H1 (cell line): ENCODE measurements at regions of chr11 and their contacts with region 1.

Region 1: GRCh38 chr11:131350872-131351271 is 19.5 kb upstream of the NTM start:
- DNase-seq: no peak
- H3K4me3 ChIP-seq: no peak overlapping the region
- H3K27ac ChIP-seq: no peak overlapping the region
- H3K4me1 ChIP-seq: peaks cover 0 to 16% (median 6%) of the 10 kb centered on the region in 4 experiments; a peak in 4 of 7 replicates
- H3K27me3 ChIP-seq: no peaks in the 10 kb centered on the region
- CTCF ChIP-seq: no peak
- EP300 ChIP-seq: no peak
- POLR2A ChIP-seq: no peak
- RAD21 ChIP-seq: no peak

Region 2: DNA sequence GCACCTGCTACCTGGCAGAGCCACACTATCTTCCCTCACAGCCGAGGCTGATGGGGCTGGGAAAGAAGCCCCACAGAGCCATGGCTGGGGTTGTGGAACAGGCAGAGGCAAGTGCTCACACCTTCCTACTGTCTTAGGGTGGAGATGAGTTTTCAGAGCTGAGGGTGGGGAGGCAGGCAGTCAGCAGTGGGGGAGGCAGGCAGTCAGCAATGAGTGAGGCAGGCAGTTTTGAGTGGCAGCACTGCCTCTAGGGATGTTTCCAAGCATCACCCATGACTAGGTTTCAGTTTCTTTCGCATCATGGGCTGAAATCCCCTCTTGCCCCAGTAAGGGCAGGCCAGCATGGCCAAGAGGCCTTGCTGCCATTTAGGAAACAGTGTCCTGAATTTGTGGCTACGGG is 22.0 kb before region 1 on chr11:
- CTCF ChIA-PET with region 1: interaction called, 10 read pairs
- POLR2A ChIA-PET with region 1: interaction called, 3 read pairs
- DNase-seq: no peak
- H3K4me3 ChIP-seq: no peak overlapping the region
- H3K27ac ChIP-seq: no peak overlapping the region
- H3K4me1 ChIP-seq: peaks cover 2 to 9% (median 4%) of the 10 kb centered on the region in 4 experiments; a peak in 5 of 7 replicates
- H3K27me3 ChIP-seq: no peaks in the 10 kb centered on the region
- CTCF ChIP-seq: no peak
- EP300 ChIP-seq: no peak
- POLR2A ChIP-seq: no peak
- RAD21 ChIP-seq: no peak

Region 3: DNA sequence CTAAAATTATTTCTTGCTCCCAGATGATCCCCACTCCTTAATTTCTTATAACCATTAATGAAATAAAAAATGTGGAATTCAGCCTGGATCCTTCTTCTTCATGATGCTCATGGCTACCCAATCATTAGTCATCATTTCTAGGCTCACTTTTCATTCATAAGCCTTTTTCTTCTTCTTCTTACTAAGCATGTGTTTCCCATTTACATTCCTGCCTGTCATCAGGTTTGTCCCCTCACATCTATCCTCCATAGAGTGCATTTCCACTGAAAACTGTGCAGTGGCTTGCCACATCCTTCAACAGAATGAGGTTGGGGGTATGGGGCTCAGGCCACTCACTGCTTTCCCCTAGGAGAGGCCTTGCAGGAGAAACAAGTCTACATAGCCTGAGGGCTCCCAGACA is 16.3 kb before region 1 on chr11:
- CTCF ChIA-PET with region 1: interaction called, 11 read pairs
- POLR2A ChIA-PET with region 1: interaction called, 3 read pairs
- DNase-seq: no peak
- H3K4me3 ChIP-seq: no peak overlapping the region
- H3K27ac ChIP-seq: no peak overlapping the region
- H3K4me1 ChIP-seq: no peaks in the 10 kb centered on the region; a peak in 1 of 7 replicates
- H3K27me3 ChIP-seq: no peaks in the 10 kb centered on the region
- CTCF ChIP-seq: no peak
- EP300 ChIP-seq: no peak
- POLR2A ChIP-seq: no peak
- RAD21 ChIP-seq: no peak

Region 4: DNA sequence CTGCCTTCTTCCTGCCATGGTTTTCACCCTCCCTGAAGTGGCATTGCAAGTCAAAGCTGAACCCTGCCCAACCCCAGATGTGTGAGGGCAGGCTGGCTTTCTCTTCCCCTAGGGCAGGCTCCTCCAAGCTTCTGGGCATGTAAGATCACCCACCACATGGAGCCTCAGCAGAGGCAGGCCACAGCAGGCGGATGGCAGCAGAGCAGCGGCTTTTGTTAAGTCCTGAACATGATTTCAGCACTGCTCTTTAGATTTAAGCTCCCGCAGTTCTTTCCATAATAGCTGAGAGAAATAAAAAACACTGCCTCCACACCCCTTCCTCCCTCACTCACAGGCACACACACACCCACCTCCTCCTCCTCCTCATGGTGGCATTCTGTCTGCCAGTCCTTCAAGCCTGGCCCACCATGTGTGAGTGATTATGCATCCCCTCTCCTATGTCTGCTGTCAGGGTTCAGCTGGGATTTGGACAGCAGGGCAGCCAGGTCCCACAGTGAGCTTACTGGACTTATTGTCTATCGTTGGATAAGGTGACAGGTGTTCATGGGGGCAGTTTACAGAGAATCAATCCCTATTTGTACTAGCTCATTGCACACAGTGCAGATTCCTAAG is 14.6 kb after region 1 on chr11:
- CTCF ChIA-PET with region 1: interaction called, 14 read pairs
- POLR2A ChIA-PET with region 1: no interaction called
- DNase-seq: no peak
- H3K4me3 ChIP-seq: no peak overlapping the region
- H3K27ac ChIP-seq: no peak overlapping the region
- H3K4me1 ChIP-seq: no peaks in the 10 kb centered on the region
- H3K27me3 ChIP-seq: 0 out of 7 replicates have a peak, but pooled peaks cover 0 to 2% (median 0%) of the 10 kb centered on the region in 4 experiments
- CTCF ChIP-seq: no peak
- EP300 ChIP-seq: no peak
- POLR2A ChIP-seq: no peak
- RAD21 ChIP-seq: no peak